ENCODE measurements at regions of chr4 and their contacts with region 1.

Region 1: DNA sequence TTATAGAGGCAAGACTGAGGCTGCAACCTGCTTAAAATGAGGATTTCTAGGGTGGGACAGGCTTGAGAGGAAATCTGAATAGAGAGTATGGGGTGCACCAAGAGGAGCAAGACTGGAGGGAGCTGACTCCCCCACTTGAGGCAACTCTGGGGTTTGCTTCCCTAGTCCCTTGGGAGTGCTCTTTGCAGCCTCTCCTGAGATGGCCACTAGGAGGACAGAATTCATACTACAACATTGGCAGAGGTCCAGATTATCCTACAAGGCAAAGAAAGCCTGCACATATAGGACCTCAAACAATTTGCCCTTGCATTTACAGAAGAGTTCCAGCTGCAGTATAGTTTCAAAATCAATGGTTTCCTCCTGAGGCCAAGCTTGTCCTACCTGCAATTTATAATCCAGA is 830.9 kb downstream of the TECRL start:
- DNase-seq: no peak
- ATAC-seq: no peak

Region 2: DNA sequence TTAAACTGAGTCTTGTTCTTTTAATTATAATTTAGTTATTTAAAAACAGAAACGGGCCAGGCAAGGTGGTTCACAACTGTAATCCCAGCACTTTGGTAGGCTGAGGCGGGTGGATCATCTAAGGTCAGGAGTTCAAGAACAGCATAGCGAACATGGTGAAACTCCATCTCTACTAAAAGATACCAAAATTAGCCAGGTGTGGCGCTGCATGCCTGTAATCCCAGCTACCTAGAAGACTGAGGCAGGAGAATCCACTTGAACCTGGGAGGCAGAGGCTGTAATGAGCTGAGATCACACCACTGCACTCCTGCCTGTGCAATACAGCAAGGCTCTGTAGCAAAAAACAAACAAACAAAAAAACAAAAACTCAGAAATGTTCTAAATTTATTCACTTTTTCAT is 22.1 kb before region 1 on chr4:
- intact Hi-C with region 1: no loop called
- DNase-seq: no peak
- ATAC-seq: no peak

Region 3: GRCh38 chr4:64882311-64883086 is 1304.1 kb after region 1 on chr4:
- intact Hi-C with region 1: loop called (anchors 5 kb)
- DNase-seq: no peak
- ATAC-seq: no peak

Measured in sciatic nerve (tissue), 2 donors.